Heart right ventricle (tissue), 16 donors: ENCODE measurements at regions of chr18 and their contacts with region 1.

Region 1: GRCh38 chr18:44679056-44679905 is 1.4 kb upstream of the SETBP1 start:
- DNase-seq: peak; percentile 85 to 88
- ATAC-seq: peak; percentile 95 to 98 (median 97)
- H3K4me3 ChIP-seq: peak overlapping the region; percentile 49 to 98 (median 85)
- H3K27ac ChIP-seq: peak overlapping the region; percentile 96 to 99 (median 98)
- H3K4me1 ChIP-seq: peaks cover 4 to 40% (median 14%) of the 10 kb centered on the region in 9 donors
- H3K27me3 ChIP-seq: peaks cover 0 to 58% (median 0%) of the 10 kb centered on the region in 7 donors
- CTCF ChIP-seq: peak; percentile 42 to 90 (median 69)

Region 2: DNA sequence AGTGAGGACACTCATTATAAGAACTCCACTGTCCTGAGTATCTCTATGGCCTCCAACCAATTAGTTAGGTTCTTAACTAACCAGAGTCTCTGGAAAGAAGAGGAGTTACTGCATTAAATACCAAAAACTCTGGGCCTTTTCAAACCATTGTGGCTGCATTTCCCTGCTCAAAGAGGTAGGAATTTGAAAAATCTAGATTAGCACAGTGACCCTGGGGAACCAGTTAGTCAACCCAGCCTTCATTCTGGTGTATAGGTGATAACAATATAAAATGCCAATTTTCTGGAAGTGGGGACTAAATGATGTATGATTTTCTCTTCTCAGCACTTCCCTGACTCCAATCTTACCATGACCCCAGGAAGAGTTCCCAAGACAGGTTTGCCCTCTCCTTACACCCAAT is 286.3 kb before region 1 on chr18:
- intact Hi-C with region 1: no loop called
- DNase-seq: no peak
- ATAC-seq: no peak
- H3K4me3 ChIP-seq: no peak overlapping the region
- H3K27ac ChIP-seq: no peak overlapping the region
- H3K4me1 ChIP-seq: no peaks in the 10 kb centered on the region
- H3K27me3 ChIP-seq: no peaks in the 10 kb centered on the region
- CTCF ChIP-seq: no peak

Region 3: DNA sequence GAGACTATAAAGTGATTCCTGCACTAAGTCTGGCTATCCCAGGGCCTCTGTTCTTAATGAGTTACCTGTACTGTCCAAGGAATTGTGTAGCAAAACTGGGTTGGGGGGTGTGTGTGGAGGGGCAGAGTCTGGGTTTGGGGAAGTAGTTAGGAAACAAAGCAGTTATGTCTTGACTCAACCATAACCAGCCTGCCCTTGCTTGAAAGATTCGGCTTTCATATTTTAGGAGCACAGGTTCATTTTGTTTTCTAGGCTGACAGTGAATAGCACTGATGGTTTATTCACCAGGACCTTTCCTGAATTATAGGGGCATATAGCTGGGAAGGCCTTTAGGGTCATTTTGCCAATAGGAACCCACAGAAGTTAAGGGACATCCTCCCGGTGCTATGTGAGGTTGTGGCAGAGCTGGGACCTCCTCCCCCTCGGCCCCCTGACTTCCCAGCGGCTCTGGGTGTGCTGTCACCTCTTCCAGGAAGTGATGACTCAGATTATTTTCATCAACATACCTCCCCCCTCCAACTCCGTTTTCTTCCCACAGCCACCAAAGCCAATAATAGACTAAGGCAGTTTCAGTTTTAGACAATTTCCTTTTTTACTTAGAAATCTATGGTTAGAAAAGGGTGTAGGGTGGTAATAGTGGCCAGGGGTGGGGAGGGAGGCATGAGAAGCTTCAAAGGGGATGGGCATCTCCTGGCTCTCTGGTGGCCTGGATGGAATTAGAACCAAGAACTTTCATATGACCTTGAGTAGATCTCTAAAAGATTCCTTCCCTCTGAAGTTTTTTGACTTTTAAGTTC is 46.2 kb after region 1 on chr18:
- intact Hi-C with region 1: loop called in 1 of 10 experiments (anchors 5 kb)
- DNase-seq: peak; percentile 33 to 64
- ATAC-seq: peak; percentile 76 to 94 (median 86)
- H3K4me3 ChIP-seq: no peak overlapping the region
- H3K27ac ChIP-seq: peak overlapping the region; percentile 32 to 82 (median 66)
- H3K4me1 ChIP-seq: peaks cover 0 to 57% (median 32%) of the 10 kb centered on the region in 9 donors
- H3K27me3 ChIP-seq: peaks cover 0 to 64% (median 0%) of the 10 kb centered on the region in 7 donors
- CTCF ChIP-seq: no peak

Region 4: GRCh38 chr18:44803019-44803650 is 123.9 kb after region 1 on chr18:
- intact Hi-C with region 1: loop called in 2 of 10 experiments (anchors 5 kb)
- DNase-seq: peak in 1 of 2 donors; percentile 44
- ATAC-seq: peak; percentile 86 to 95 (median 90)
- H3K4me3 ChIP-seq: no peak overlapping the region
- H3K27ac ChIP-seq: peak overlapping the region in 9 of 10 donors; percentile 21 to 67 (median 61)
- H3K4me1 ChIP-seq: peaks cover 6 to 78% (median 36%) of the 10 kb centered on the region in 9 donors
- H3K27me3 ChIP-seq: peaks cover 0 to 5% (median 0%) of the 10 kb centered on the region in 7 donors
- CTCF ChIP-seq: no peak

Region 5: DNA sequence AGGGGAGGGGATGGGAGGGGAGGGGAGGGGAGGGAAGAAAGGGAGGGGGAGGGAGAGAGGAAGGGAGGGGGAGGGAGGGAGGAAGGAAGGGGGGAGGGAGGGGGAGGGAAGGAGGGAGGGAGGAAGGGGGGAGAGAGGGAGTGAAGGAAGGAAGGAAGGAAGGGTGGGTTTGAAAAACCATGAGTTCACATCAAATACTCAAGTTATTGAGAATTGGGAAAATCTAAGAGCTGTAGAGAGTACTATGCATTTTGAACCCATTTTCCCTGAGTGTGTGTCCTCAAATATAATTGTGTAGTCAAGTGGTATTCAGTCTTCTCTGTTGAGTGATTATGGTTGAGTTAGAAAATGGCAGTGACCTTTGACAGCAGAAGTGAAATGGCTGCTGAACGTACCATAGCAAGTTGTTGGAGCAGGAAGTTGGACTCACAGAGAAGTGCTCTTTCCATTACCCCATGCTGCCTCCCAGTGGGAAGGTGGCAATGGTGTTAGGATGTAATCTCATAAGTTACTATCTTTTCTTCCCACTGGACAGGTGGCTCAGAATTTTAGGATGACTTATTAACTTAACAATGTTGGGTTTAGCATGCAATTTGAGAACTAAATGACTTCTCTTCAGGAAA is 216.0 kb after region 1 on chr18:
- intact Hi-C with region 1: loop called in 7 of 10 experiments (anchors 1 to 10 kb)
- DNase-seq: peak; percentile 18 to 42
- ATAC-seq: peak in 6 of 8 donors; percentile 49 to 81 (median 68)
- H3K4me3 ChIP-seq: no peak overlapping the region
- H3K27ac ChIP-seq: no peak overlapping the region
- H3K4me1 ChIP-seq: peaks cover 0 to 30% (median 10%) of the 10 kb centered on the region in 9 donors
- H3K27me3 ChIP-seq: peaks cover 0 to 6% (median 0%) of the 10 kb centered on the region in 7 donors
- CTCF ChIP-seq: peak; percentile 22 to 60 (median 52)

Region 6: GRCh38 chr18:45026162-45026561 is 346.9 kb after region 1 on chr18:
- intact Hi-C with region 1: loop called in 1 of 10 experiments (anchors 10 kb)
- DNase-seq: no peak
- ATAC-seq: no peak
- H3K4me3 ChIP-seq: no peak overlapping the region
- H3K27ac ChIP-seq: no peak overlapping the region
- H3K4me1 ChIP-seq: no peaks in the 10 kb centered on the region
- H3K27me3 ChIP-seq: no peaks in the 10 kb centered on the region
- CTCF ChIP-seq: peak in 4 of 9 donors; percentile 19 to 41 (median 26)

Region 7: GRCh38 chr18:45291621-45292615 is 612.6 kb after region 1 on chr18:
- intact Hi-C with region 1: no loop called
- DNase-seq: no peak
- ATAC-seq: no peak
- H3K4me3 ChIP-seq: no peak overlapping the region
- H3K27ac ChIP-seq: no peak overlapping the region
- H3K4me1 ChIP-seq: no peaks in the 10 kb centered on the region
- H3K27me3 ChIP-seq: peaks cover 0 to 7% (median 0%) of the 10 kb centered on the region in 7 donors
- CTCF ChIP-seq: no peak

Region 8: DNA sequence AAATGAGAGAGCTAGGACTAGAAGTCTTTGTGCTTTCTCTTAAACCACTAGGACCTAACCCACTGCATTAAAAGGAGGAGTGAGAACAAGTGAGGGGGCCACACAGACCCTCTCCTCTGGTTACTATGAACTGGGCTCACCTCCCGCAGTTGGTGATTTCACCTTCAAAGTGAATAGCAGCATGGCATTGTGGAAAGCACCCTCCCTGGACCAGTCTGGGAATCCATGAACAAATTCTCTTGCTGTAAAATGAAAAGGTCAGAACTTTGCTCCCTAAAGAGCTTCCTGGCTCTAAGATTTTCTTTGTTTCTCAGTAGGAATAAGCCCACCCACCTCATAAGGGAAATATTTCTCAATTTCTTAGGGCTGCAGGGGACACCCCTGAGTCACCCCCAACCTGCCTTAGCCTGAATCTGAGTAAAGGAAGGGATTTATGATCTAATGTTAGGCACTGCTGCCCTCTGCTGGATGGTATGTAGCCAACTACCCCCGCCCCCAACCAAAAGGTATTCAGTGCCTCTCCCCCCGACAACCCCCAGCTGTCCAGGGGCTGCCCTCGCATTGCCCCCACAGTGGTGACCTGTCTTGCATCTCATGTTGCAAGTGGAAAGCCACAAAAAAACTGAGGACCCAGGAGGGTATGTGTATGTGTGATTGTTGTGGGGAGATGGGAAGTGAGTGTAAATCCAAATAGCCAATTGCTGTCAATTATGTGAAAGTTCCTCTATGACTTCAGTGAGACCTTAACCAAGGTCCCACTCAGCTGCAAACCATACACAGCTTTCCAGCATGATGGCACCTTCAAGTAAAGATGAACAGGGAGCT is 705.1 kb after region 1 on chr18:
- intact Hi-C with region 1: loop called in 4 of 10 experiments (anchors 10 kb)
- DNase-seq: peak; percentile 18 to 53
- ATAC-seq: peak; percentile 65 to 78 (median 68)
- H3K4me3 ChIP-seq: no peak overlapping the region
- H3K27ac ChIP-seq: no peak overlapping the region
- H3K4me1 ChIP-seq: peaks cover 0 to 2% (median 0%) of the 10 kb centered on the region in 9 donors
- H3K27me3 ChIP-seq: peaks cover 0 to 15% (median 0%) of the 10 kb centered on the region in 7 donors
- CTCF ChIP-seq: peak; percentile 43 to 81 (median 68)